ENCODE measurements at regions of chr21 and their contacts with region 1.

Region 1: GRCh38 chr21:28336314-28336713 is 656.4 kb downstream of the LTN1 start:
- DNase-seq: no peak
- H3K4me3 ChIP-seq: no peak overlapping the region
- H3K27ac ChIP-seq: no peak overlapping the region
- H3K4me1 ChIP-seq: peaks cover 0 to 2% (median 0%) of the 10 kb centered on the region in 4 experiments; a peak in 1 of 7 replicates
- H3K27me3 ChIP-seq: no peaks in the 10 kb centered on the region
- CTCF ChIP-seq: peak in 1 of 3 experiments; percentile 38; a peak in 2 of 4 replicates
- EP300 ChIP-seq: no peak
- POLR2A ChIP-seq: no peak
- RAD21 ChIP-seq: peak; percentile 76 to 79

Region 2: DNA sequence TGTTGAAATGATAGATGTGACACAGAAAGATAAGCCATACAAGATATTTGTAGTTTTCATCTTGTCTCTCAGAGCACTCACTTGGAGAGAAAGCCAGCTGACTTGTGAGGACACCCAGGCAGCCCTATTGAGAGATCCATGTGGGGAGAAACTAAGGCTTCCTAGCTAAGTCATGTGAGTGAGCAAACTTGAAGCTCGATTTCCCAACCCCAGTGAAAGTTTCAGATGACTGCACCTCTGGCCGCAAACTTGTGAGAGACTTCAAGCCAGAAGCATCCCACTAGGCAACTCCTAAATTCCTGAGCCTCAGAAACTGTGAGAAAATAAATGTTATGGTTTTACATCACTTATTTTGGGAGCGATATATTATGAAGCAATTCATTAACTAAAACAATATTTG is 175.9 kb before region 1 on chr21:
- CTCF ChIA-PET with region 1: no interaction called
- POLR2A ChIA-PET with region 1: no interaction called
- DNase-seq: no peak
- H3K4me3 ChIP-seq: no peak overlapping the region
- H3K27ac ChIP-seq: no peak overlapping the region
- H3K4me1 ChIP-seq: no peaks in the 10 kb centered on the region
- H3K27me3 ChIP-seq: no peaks in the 10 kb centered on the region
- CTCF ChIP-seq: no peak
- EP300 ChIP-seq: no peak
- POLR2A ChIP-seq: no peak
- RAD21 ChIP-seq: no peak

Region 3: GRCh38 chr21:28325618-28326017 is 10.7 kb before region 1 on chr21:
- CTCF ChIA-PET with region 1: interaction called, 15 read pairs
- POLR2A ChIA-PET with region 1: no interaction called
- DNase-seq: peak in 1 of 2 experiments; percentile 41
- H3K4me3 ChIP-seq: peak overlapping the region in 1 of 4 experiments; percentile 17; a peak in 1 of 8 replicates
- H3K27ac ChIP-seq: no peak overlapping the region
- H3K4me1 ChIP-seq: peaks cover 0 to 7% (median 1%) of the 10 kb centered on the region in 4 experiments; a peak in 3 of 7 replicates
- H3K27me3 ChIP-seq: no peaks in the 10 kb centered on the region
- CTCF ChIP-seq: no peak
- EP300 ChIP-seq: no peak
- POLR2A ChIP-seq: no peak
- RAD21 ChIP-seq: no peak

Region 4: DNA sequence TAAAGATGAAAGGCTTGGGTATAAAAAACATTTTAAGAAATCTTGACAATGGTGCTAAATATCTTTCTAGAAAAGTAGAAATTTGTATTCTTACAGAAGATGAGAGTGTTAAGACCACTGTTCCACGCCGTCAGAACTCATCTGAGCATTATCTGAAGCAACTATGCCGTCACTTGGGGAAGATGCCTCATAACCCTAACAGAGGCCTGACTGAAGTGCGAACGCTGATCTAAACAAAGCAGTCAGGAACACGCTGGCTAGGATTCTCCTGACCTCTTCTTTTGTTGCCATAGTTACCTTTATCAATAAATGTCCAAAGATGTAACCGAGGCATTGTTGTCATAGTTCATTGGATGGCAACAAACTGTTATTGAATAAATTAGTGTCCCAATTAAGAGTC is 43.9 kb after region 1 on chr21:
- CTCF ChIA-PET with region 1: no interaction called
- POLR2A ChIA-PET with region 1: no interaction called
- DNase-seq: no peak
- H3K4me3 ChIP-seq: no peak overlapping the region
- H3K27ac ChIP-seq: no peak overlapping the region
- H3K4me1 ChIP-seq: no peaks in the 10 kb centered on the region; a peak in 1 of 7 replicates
- H3K27me3 ChIP-seq: no peaks in the 10 kb centered on the region
- CTCF ChIP-seq: no peak
- EP300 ChIP-seq: no peak
- POLR2A ChIP-seq: no peak
- RAD21 ChIP-seq: no peak

Region 5: DNA sequence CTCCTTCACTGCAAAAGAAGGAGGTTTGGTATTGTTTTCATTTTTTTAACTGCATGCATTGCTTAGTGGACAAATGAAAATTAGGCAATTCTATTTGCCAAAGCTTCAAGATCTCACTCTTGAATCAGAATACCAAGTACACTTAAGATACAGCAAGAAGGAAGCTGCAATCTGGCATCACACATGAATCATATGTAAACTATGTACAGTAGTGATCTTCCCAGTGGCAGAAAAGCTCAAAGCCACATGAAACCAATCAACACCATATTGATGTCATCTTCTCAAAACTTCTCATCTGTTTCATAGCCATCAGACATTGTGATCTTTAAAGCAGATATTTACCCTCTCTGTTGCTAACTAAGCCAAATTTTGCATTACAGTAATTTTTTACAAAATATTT is 106.3 kb after region 1 on chr21:
- CTCF ChIA-PET with region 1: no interaction called
- POLR2A ChIA-PET with region 1: no interaction called
- DNase-seq: no peak
- H3K4me3 ChIP-seq: no peak overlapping the region
- H3K27ac ChIP-seq: no peak overlapping the region
- H3K4me1 ChIP-seq: no peaks in the 10 kb centered on the region
- H3K27me3 ChIP-seq: no peaks in the 10 kb centered on the region
- CTCF ChIP-seq: no peak
- EP300 ChIP-seq: no peak
- POLR2A ChIP-seq: no peak
- RAD21 ChIP-seq: no peak